ENCODE measurements at regions of chr20 and their contacts with region 1.

Region 1: DNA sequence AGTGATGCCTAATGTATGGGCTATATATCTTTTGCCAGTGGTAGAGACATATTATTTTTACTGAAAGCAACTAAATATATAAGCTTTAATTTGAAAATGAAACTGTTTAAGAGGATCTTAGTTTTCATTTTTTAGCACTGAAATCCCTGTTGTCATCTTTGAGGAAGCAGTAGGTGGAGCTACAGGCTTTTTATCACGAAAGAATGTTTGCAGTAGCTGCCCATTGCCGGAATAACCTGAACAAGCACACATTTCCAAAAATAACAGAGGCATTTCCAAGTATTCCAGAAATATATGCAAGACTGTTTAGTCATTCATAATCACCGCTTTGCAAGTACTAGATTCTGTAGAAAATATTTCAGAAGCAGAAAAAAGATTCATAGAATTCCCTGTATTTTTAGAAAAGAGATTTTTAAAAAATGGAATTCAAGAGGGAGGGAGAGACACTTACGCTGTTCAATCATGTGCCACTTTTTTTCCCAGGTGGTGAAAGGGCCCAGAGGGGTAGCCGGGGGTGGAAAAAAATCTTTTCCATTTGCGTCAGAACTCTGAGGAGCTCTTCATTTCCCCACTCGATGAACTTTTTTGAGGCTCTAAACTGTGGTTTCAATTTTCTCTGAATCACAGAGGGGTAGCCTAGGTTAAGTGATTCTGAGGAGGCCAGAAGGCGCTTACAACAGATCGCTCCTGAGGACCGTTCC is 142.5 kb upstream of the FERMT1 start:
- DNase-seq: no peak
- H3K4me3 ChIP-seq: peak overlapping the region; percentile 12 to 21
- H3K27ac ChIP-seq: peak overlapping the region; percentile 46 to 64
- H3K4me1 ChIP-seq: peaks cover 0 to 22% (median 2%) of the 10 kb centered on the region in 4 donors
- H3K27me3 ChIP-seq: no peaks in the 10 kb centered on the region
- CTCF ChIP-seq: peak; percentile 38 to 44

Region 2: GRCh38 chr20:6200092-6200491 is 65.3 kb before region 1 on chr20:
- intact Hi-C with region 1: no loop called
- DNase-seq: no peak
- H3K4me3 ChIP-seq: no peak overlapping the region
- H3K27ac ChIP-seq: no peak overlapping the region
- H3K4me1 ChIP-seq: no peaks in the 10 kb centered on the region
- H3K27me3 ChIP-seq: no peaks in the 10 kb centered on the region
- CTCF ChIP-seq: no peak

Region 3: GRCh38 chr20:6583134-6583738 is 317.9 kb after region 1 on chr20:
- intact Hi-C with region 1: loop called (anchors 5 kb)
- DNase-seq: no peak
- H3K4me3 ChIP-seq: no peak overlapping the region
- H3K27ac ChIP-seq: no peak overlapping the region
- H3K4me1 ChIP-seq: no peaks in the 10 kb centered on the region
- H3K27me3 ChIP-seq: no peaks in the 10 kb centered on the region
- CTCF ChIP-seq: peak; percentile 31 to 44

Region 4: GRCh38 chr20:6767536-6768227 is 502.3 kb after region 1 on chr20 and contains the start of gene BMP2:
- intact Hi-C with region 1: loop called (anchors 10 kb)
- DNase-seq: peak; percentile 24 to 68
- H3K4me3 ChIP-seq: peak within 1 kb of the TSS; percentile 70 to 87
- H3K27ac ChIP-seq: peak within 1 kb of the TSS; percentile 69 to 74
- H3K4me1 ChIP-seq: peaks cover 0 to 36% (median 20%) of the 10 kb centered on the region in 4 donors
- H3K27me3 ChIP-seq: no peaks in the 10 kb centered on the region
- CTCF ChIP-seq: no peak